BJ (cell line): ENCODE measurements at regions of chr5 and their contacts with region 1.

Region 1: DNA sequence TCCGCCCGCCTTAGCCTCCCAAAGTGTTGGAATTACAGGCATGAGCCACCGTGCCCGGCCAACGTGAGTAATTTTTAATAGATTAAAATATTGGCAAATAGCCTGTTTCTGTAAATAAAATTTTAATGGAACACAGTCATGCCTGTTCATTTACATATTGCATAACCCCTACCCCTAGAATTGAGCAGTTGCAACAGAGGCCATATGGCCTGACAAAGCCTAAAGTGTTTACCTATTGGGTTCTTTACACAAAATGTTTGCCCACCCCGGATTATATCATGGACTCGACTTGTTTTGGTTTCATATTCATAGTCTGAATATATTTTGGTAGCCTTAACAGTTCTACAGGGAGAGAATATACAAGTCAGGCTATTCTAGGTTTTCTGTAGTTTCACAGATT is 5.3 kb downstream of the NSA2 start:
- DNase-seq: no peak
- H3K4me3 ChIP-seq: no peak overlapping the region
- H3K27me3 ChIP-seq: no peaks in the 10 kb centered on the region
- CTCF ChIP-seq: no peak

Region 2: GRCh38 chr5:74490811-74491210 is 281.5 kb before region 1 on chr5:
- CTCF ChIA-PET with region 1: no interaction called
- POLR2A ChIA-PET with region 1: no interaction called
- DNase-seq: no peak
- H3K4me3 ChIP-seq: no peak overlapping the region
- H3K27me3 ChIP-seq: no peaks in the 10 kb centered on the region
- CTCF ChIP-seq: no peak

Region 3: DNA sequence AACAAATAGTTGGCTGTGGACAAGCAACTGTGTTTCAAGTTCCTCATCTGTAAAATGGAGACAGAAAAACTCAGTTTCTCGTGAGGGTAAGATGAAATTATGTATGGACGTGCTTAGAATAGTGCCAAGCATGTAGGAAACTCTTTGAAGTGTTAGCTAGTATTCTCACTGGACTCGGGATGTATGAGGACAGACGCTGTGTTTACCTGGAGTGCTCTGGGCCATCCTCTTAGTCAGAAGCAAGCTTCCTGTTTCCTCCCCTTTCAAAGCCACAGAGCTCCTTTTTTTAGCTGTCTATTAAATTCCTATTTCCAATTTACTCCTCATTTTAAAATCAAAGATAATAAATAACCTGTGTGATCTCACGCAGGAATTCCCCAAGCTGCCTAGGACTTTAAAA is 1607.0 kb after region 1 on chr5:
- CTCF ChIA-PET with region 1: no interaction called
- POLR2A ChIA-PET with region 1: interaction called, 10 read pairs
- DNase-seq: no peak
- H3K4me3 ChIP-seq: no peak overlapping the region
- H3K27me3 ChIP-seq: no peaks in the 10 kb centered on the region
- CTCF ChIP-seq: no peak